ENCODE measurements at regions of chr2 and their contacts with region 1.

Region 1: GRCh38 chr2:176814306-176815052 is 398.1 kb upstream of the HNRNPA3 start:
- DNase-seq: no peak
- ATAC-seq: no peak

Region 2: DNA sequence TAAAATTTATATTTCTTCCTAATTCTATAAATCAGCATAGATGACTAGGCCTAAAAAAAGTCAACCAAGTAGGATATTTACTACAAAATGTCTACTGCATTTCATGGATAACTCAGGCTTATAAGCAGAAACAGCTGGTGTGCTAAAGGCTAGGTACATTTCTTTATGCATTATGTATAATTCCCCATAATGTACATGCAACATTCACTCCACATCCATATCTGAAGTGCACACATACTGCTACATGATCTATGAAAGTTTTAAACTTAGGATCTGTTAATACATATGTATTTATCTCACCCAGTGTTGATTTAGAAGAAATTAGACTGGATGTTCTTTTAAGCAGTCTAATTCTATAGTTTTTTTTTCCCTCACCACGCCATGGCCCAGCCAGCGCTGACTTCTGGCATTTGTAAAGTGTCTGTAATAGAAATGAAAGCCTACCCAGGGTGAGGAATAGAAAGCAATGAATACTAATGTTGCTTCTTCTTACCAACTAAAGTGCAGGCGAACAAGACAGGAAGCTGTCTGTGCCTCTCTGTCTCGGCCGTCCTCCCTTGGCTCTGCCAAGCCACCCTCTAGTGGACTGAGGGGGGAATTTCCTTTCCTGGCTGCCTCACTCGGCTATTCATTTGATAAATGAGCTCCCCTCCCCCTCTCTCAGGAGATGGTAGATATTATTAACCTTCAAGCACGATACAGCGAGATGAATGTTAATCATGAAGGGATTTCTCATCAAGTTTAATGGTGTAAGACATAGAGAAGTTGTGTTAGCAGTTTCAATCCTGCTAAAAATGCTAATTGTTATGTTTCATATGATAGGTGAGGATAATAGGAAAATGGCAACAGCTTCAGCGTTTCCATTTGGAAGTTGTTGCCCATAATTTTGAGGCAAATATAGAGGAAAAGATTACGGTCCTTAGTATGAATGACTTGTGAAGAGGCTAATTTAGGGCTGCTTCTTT is 160.7 kb before region 1 on chr2:
- intact Hi-C with region 1: loop called (anchors 5 kb)
- DNase-seq: peak; percentile 57
- ATAC-seq: peak; percentile 88

Region 3: DNA sequence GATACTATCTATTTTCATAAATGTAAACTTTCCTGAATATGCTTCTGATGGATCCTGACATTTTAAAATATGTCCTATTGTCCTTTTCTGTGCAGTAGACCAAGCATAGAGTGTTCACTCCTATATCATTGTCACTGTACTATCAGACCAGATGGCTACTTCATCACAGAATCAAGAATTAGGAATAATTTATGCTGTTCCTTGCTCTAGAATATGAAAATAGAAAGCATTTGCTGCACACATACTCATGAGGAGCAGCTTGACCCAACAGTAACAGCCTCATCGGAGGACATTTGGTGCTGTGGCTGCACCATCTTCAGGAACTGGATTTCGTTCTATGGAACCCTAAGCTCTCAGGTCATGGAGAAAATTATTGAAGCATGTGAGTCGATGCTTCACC is 70.8 kb before region 1 on chr2:
- intact Hi-C with region 1: no loop called
- DNase-seq: no peak
- ATAC-seq: no peak

Region 4: GRCh38 chr2:176753752-176754474 is 60.6 kb before region 1 on chr2:
- intact Hi-C with region 1: no loop called
- DNase-seq: no peak
- ATAC-seq: peak; percentile 82

Region 5: DNA sequence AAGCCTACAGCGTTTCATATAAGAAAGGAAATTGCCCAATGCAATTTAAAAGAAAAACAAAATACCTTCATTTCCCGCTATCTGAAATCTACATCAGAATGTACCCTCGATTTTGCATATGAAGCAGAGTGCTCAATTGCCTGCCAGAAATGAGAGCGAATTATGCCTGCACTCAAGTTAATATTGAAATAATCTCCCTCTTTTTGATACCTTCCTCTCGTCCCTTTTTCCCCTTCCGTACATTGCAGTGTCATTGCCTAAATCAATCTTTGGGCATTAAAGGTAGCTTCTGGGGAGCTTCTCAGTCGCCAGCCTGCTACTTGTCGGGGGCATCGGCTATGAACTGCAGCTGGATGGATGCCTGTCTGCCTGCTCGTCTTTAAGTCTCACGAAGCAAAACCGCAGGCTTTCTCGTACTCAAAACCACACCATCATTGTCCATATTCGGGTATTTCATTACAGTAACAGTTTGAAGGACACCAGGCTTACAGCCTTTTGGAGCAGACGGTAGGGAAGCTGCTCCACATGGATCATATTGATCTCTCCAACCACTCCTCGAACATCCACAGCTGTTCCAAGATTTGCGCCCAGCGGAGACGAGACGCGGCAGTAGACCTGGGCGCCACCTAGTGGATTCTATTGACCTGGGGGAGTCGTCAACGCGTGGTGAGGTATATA is 334.1 kb after region 1 on chr2:
- intact Hi-C with region 1: loop called (anchors 10 kb)
- DNase-seq: peak; percentile 81
- ATAC-seq: peak; percentile 72